ENCODE measurements at regions of chr3 and their contacts with region 1.

Region 1: GRCh38 chr3:151203051-151203420 is at the start of gene GPR171:
- DNase-seq: peak; percentile 89
- ATAC-seq: peak; percentile 60
- H3K4me3 Mint-ChIP-seq: peak within 1 kb of the TSS; percentile 98
- H3K27ac Mint-ChIP-seq: peak within 1 kb of the TSS; percentile 97
- H3K4me1 Mint-ChIP-seq: peaks cover 67% of the 10 kb centered on the region
- H3K27me3 Mint-ChIP-seq: no peaks in the 10 kb centered on the region
- total RNA-seq, gene GPR171: 153 to 218 TPM

Region 2: GRCh38 chr3:151183265-151183671 is 19.8 kb before region 1 on chr3:
- CTCF ChIA-PET with region 1: interaction called, 24 read pairs
- DNase-seq: peak; percentile 55
- ATAC-seq: peak; percentile 85
- H3K4me3 Mint-ChIP-seq: peak overlapping the region; percentile 64
- H3K27ac Mint-ChIP-seq: peak overlapping the region; percentile 83
- H3K4me1 Mint-ChIP-seq: peaks cover 50% of the 10 kb centered on the region
- H3K27me3 Mint-ChIP-seq: no peaks in the 10 kb centered on the region

Measured in activated CD8-positive, alpha-beta memory T cell treated with anti-CD3 and anti-CD28 coated beads, Interleukin-2, amount 10 ng/mL, durations not matched to agents 7 days and 5 days (primary cell).